ENCODE measurements at regions of chr11 and their contacts with region 1.

Region 1: GRCh38 chr11:77994412-77995362 is at the start of gene INTS4:
- DNase-seq: peak; percentile 99
- ATAC-seq: peak; percentile 98
- H3K4me3 ChIP-seq: peak within 1 kb of the TSS; percentile 82 to 99 (median 83)
- H3K27ac ChIP-seq: peak within 1 kb of the TSS; percentile 77
- H3K4me1 ChIP-seq: peaks cover 22% of the 10 kb centered on the region
- H3K27me3 ChIP-seq: no peaks in the 10 kb centered on the region; a peak in 1 of 5 replicates
- CTCF ChIP-seq: no peak; the same call in 1 of the 2 replicates
- EP300 ChIP-seq: no peak
- POLR2A ChIP-seq: peak; percentile 57 to 75
- RAD21 ChIP-seq: peak; percentile 20; the same call in 1 of the 2 replicates
- total RNA-seq, gene INTS4: 29.6 and 37.3 TPM in 2 replicates

Region 2: DNA sequence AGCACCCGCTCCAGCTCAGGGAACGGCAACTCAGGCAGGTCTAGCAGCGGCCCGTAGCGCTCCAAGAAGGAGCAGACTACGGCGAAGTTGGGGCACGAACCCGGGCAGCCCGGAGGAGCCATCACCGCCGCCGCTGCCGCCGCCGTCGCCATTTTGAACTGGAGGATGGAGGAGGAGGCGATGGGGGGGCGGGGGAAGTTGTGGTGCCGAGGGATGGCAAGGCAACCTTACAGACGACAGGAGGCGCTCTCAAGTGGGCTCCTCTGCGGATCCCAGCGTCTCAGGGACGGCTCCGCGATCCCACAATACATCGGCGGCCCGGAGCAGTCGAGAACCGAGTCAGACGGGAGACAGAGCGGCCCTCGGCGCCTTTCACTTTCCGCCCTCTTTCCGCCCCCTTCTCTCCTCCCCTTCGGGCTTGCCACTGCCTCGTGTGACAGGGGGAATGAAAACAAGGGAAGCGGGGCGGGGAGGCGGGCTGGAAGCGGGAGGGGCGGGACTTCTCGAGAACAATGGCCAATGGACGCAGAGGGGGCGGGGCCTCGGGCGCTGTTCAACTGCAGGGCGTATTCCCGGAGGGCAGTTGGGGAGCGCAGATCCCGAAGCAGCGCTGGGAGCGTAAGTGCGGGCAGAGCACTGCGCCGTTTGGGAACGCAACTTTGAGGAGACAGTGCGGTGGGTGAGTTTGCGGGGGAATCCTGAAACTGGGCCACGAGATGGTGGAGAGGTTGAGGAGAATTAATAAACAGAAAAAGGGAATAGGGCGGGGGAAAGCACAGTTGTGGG is 173.9 kb before region 1 on chr11 and contains the starts of genes AAMDC and RSF1:
- CTCF ChIA-PET with region 1: no interaction called
- POLR2A ChIA-PET with region 1: interaction called, 9 read pairs
- in situ Hi-C with region 1: no loop called
- intact Hi-C with region 1: loop called (anchors 2 kb)
- DNase-seq: peak; percentile 95
- ATAC-seq: peak; percentile 91
- H3K4me3 ChIP-seq: peak within 1 kb of the TSS; percentile 79 to 94 (median 94)
- H3K27ac ChIP-seq: peak within 1 kb of the TSS; percentile 85
- H3K4me1 ChIP-seq: peaks cover 55% of the 10 kb centered on the region
- H3K27me3 ChIP-seq: no peaks in the 10 kb centered on the region; a peak in 1 of 5 replicates
- CTCF ChIP-seq: peak; percentile 81
- EP300 ChIP-seq: 0 out of 4 replicates have a peak, but pooled peaks of 1 of the 2 experiments have one; percentile 3
- POLR2A ChIP-seq: peak; percentile 80 to 93
- RAD21 ChIP-seq: peak; percentile 58; the same call in 1 of the 2 replicates
- total RNA-seq, gene AAMDC: 35.6 and 49.5 TPM in 2 replicates
- total RNA-seq, gene RSF1: 33.1 and 47.7 TPM in 2 replicates

Region 3: GRCh38 chr11:77959434-77959833 is 35.3 kb before region 1 on chr11:
- CTCF ChIA-PET with region 1: no interaction called
- POLR2A ChIA-PET with region 1: no interaction called
- in situ Hi-C with region 1: no loop called
- intact Hi-C with region 1: no loop called
- DNase-seq: no peak
- ATAC-seq: no peak
- H3K4me3 ChIP-seq: no peak overlapping the region
- H3K27ac ChIP-seq: no peak overlapping the region
- H3K4me1 ChIP-seq: no peaks in the 10 kb centered on the region
- H3K27me3 ChIP-seq: no peaks in the 10 kb centered on the region
- CTCF ChIP-seq: no peak
- EP300 ChIP-seq: no peak
- POLR2A ChIP-seq: no peak
- RAD21 ChIP-seq: no peak

Region 4: DNA sequence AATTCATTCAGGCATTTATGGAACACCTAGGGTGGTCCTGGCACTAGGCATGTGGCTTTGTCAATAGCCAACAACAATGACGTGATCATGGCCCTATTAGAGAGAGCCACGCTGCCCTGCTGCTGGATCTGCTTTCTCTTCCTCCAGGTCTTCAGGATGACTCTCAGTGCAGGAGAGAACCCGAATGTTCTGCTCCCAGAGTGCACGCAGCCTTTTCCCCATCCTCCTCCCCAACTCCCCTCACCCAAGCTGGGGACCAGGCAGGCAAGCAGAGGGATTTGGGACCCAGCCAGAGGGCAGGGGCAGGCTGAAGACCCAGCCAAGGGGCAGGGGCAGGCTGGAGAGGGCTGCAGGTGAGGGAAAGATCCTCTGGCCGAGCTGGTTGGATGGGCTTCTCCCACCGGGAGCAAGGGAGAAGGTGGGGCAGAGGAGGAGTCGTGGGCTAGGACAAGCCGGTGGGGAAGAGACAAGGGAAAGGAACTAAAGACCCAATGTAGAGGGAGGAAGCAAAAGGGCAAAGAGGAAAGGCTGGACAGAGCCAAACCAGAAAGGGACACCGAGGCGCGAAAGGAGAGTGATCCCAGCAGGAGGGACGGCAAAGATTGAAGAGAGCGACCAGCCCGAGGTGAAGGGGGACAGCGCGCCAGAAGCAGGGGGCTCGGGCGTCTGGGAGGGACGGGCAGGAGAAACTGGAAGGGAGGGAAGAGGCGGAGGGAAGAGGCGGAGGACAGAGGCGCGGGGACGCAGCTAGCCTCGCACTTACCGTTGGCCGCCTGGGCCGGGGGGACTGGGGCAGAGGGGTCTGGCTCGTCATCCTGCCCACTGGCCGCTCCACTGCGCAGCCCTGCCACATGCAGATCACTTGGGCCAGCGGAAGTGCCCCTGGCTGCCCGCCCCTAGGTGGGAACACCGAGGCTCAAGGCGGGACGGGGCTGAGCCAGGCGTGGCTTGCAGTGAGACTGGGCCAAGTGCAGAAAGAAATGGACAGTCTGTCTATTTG is 28.0 kb after region 1 on chr11 and contains the start of gene KCTD14:
- CTCF ChIA-PET with region 1: no interaction called
- POLR2A ChIA-PET with region 1: interaction called, 27 read pairs
- in situ Hi-C with region 1: no loop called
- intact Hi-C with region 1: no loop called
- DNase-seq: peak; percentile 53
- ATAC-seq: peak; percentile 94
- H3K4me3 ChIP-seq: peak within 1 kb of the TSS; percentile 56 to 79 (median 67)
- H3K27ac ChIP-seq: peak within 1 kb of the TSS; percentile 63
- H3K4me1 ChIP-seq: peaks cover 50% of the 10 kb centered on the region
- H3K27me3 ChIP-seq: no peaks in the 10 kb centered on the region
- CTCF ChIP-seq: peak; percentile 31
- EP300 ChIP-seq: no peak
- POLR2A ChIP-seq: peak; percentile 42 to 89; a peak in 3 of 4 replicates
- RAD21 ChIP-seq: no peak
- total RNA-seq, gene KCTD14: 10.3 and 15.3 TPM in 2 replicates

Region 5: DNA sequence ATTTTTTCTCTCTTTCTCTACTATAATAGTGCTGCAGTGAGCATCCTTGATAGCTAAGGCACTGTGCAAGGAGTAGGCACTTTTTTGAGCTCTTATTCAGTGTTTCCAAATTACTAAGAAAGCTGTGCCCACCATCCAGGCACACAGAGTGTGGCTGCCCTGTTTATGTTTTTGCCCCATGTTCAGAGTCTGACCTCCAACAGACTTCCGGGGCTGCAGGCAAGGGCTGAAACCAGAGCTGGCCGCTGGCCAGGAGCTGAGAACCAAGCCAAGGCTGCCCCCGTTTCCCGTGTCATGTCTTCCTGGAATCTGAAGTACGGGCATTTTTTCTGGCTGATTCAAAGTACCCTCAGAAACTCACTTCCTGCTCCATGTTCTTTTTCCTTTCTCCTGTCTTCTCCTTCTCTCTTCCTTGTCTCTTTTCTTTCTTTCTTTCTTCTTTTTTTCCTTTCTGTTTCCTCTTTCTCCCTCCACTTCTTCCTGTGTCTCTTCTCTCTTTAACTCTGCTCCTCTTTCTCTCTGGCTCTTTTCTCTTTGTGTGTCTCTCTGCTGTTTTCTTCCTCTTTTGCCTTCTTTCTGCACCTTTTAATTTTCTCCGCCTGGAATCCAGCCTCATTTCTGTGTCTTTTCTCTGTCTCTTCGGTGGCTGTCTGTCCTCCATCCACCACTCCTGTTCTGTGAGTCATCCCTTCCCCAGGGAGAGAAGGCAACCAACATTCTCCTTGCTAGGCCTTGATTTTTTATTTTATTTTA is 45.4 kb after region 1 on chr11:
- CTCF ChIA-PET with region 1: interaction called, 12 read pairs
- POLR2A ChIA-PET with region 1: interaction called, 25 read pairs
- in situ Hi-C with region 1: no loop called
- intact Hi-C with region 1: no loop called
- DNase-seq: peak; percentile 67
- ATAC-seq: peak; percentile 50
- H3K4me3 ChIP-seq: peak overlapping the region; percentile 4 to 34 (median 11); a peak in 3 of 6 replicates
- H3K27ac ChIP-seq: peak overlapping the region; percentile 73
- H3K4me1 ChIP-seq: peaks cover 74% of the 10 kb centered on the region
- H3K27me3 ChIP-seq: no peaks in the 10 kb centered on the region
- CTCF ChIP-seq: peak; percentile 25
- EP300 ChIP-seq: peak in 1 of 2 experiments; percentile 34; a peak in 1 of 4 replicates
- POLR2A ChIP-seq: no peak; a peak in 1 of 4 replicates
- RAD21 ChIP-seq: no peak

Region 6: DNA sequence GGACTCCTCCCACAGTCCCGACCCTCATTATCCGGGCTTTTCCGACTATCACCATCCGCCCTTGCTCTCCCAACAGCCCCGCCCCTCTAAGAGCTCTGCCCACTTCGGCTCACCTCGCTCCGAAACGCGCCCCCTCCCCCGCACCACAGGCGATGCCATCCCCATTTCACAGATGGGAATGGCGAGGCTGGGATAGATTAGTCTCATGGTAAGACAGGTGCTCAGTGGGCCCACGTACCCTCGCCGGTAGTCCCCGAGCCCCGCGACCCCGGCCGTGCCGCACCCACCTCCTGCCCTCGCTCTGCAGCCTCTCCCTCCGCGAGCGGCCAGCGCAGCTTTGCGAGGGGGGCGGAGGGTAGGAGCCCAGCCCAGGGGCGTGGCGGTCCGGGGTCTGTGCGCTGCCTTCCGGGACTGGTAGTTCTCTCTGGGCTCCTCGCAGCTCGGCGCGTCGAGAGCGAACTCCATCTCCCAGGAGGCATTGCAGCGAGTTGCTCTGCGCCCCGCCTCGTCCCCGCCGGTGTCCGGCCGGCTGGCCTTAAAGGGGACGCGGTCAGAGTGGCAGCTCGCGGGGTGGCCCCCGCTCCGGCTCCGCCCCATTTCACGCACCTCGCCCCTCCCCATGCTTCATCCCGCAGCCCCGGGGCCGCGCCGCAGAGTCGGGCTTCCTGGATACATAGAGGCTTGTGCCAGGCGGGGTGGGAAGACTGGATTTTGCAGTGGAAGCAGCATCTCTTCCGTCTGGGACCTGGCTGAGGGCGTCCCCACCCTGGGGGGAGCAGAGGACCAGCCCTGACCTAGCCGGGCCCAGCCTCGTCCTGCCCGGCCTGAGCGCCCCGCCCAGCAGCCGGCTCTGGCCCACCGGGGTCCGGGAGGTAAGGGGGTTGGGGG is 193.8 kb after region 1 on chr11 and contains the starts of genes KCTD21 and USP35:
- CTCF ChIA-PET with region 1: no interaction called
- POLR2A ChIA-PET with region 1: interaction called, 14 read pairs
- in situ Hi-C with region 1: no loop called
- intact Hi-C with region 1: no loop called
- DNase-seq: peak; percentile 92
- ATAC-seq: peak; percentile 93
- H3K4me3 ChIP-seq: peak within 1 kb of the TSS; percentile 78 to 96 (median 86)
- H3K27ac ChIP-seq: peak within 1 kb of the TSS; percentile 47
- H3K4me1 ChIP-seq: peaks cover 78% of the 10 kb centered on the region
- H3K27me3 ChIP-seq: no peaks in the 10 kb centered on the region; a peak in 1 of 5 replicates
- CTCF ChIP-seq: peak; percentile 9; the same call in 1 of the 2 replicates
- EP300 ChIP-seq: peak in 1 of 2 experiments; percentile 19; a peak in 2 of 4 replicates
- POLR2A ChIP-seq: peak in 1 of 2 experiments; percentile 85; a peak in 2 of 4 replicates
- RAD21 ChIP-seq: 0 out of 2 replicates have a peak, but pooled peaks have one; percentile 13
- total RNA-seq, gene KCTD21: 3.1 and 3.9 TPM in 2 replicates
- total RNA-seq, gene USP35: 1.8 and 4.6 TPM in 2 replicates